ENCODE measurements at regions of chr12 and their contacts with region 1.

Region 1: DNA sequence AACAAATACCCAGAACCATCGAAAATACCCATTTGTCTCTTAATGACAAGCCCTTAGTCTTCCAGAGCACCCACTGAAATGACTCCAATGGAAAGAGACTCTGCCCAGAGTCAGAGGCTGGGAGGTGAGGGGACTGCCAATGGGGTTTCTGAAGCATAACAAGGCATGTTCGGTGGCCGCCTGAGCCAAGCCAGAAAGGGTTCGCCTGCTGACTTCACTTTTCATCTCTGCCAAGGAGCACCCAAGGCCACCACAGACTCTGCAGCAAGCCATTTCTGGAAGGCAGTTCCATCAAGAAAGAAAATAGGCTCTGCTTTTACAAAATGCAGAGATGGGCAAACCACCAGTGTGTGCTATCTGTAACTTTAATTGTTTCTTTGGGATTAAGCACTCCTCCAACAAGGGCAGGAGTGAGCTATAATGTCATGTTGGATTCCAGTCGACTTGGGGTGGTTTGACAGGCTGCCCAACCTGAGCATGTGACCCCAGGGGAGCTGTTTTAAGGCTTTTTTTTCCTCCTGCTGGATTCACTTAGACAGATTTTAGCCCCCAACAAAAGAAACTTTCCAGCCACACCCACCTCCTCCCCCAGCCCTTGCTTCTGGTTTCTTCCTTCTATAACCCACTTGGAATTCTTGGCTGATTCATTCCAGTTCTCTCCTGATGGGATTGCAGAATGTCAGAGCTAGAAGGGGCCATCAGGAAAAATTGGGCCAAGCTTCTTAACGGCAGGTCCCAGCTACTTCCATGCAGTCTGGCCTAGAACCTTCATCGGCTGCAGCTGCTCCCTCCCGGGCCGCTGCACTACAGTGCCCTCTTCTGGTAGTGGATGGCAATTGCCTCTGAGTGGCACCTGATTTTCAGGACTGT is 24.1 kb downstream of the CKAP4 start:
- DNase-seq: peak; percentile 41 to 80 (median 66)
- ATAC-seq: peak; percentile 78
- H3K4me3 ChIP-seq: no peak overlapping the region
- H3K4me3 Mint-ChIP-seq: peak overlapping the region in 3 of 10 donors; percentile 14 to 67 (median 33)
- H3K27ac ChIP-seq: no peak overlapping the region
- H3K27ac Mint-ChIP-seq: peak overlapping the region in 1 of 9 donors; percentile 49
- H3K4me1 ChIP-seq: peaks cover 0 to 13% of the 10 kb centered on the region in 2 donors
- H3K4me1 Mint-ChIP-seq: peaks cover 12 to 22% (median 19%) of the 10 kb centered on the region in 7 donors
- H3K27me3 ChIP-seq: no peaks in the 10 kb centered on the region
- H3K27me3 Mint-ChIP-seq: peaks cover 4 to 20% (median 10%) of the 10 kb centered on the region in 5 donors

Region 2: GRCh38 chr12:105420659-105421240 is 803.0 kb before region 1 on chr12:
- CTCF ChIA-PET with region 1: no interaction called
- POLR2A ChIA-PET with region 1: no interaction called
- intact Hi-C with region 1: loop called (anchors 1 kb)
- DNase-seq: peak in 8 of 9 donors; percentile 8 to 56 (median 44)
- ATAC-seq: peak; percentile 78
- H3K4me3 ChIP-seq: no peak overlapping the region
- H3K4me3 Mint-ChIP-seq: no peak overlapping the region
- H3K27ac ChIP-seq: no peak overlapping the region
- H3K27ac Mint-ChIP-seq: no peak overlapping the region
- H3K4me1 ChIP-seq: no peaks in the 10 kb centered on the region
- H3K4me1 Mint-ChIP-seq: no peaks in the 10 kb centered on the region
- H3K27me3 ChIP-seq: no peaks in the 10 kb centered on the region
- H3K27me3 Mint-ChIP-seq: peaks cover 0 to 6% (median under 1%) of the 10 kb centered on the region in 5 donors

Region 3: GRCh38 chr12:106247674-106248311 is 24.1 kb after region 1 on chr12 and contains the start of gene CKAP4:
- CTCF ChIA-PET with region 1: interaction called, 12 read pairs
- POLR2A ChIA-PET with region 1: interaction called, 9 read pairs
- intact Hi-C with region 1: loop called (anchors 1 kb)
- DNase-seq: peak; percentile 45 to 65 (median 55)
- ATAC-seq: peak; percentile 59
- H3K4me3 ChIP-seq: peak within 1 kb of the TSS; percentile 69
- H3K4me3 Mint-ChIP-seq: peak within 1 kb of the TSS; percentile 81 to 92 (median 86)
- H3K27ac ChIP-seq: peak within 1 kb of the TSS; percentile 80
- H3K27ac Mint-ChIP-seq: peak within 1 kb of the TSS; percentile 58 to 98 (median 94)
- H3K4me1 ChIP-seq: peaks cover 17 to 22% of the 10 kb centered on the region in 2 donors
- H3K4me1 Mint-ChIP-seq: peaks cover 13 to 37% (median 31%) of the 10 kb centered on the region in 7 donors
- H3K27me3 ChIP-seq: no peaks in the 10 kb centered on the region
- H3K27me3 Mint-ChIP-seq: peaks cover 0 to 19% (median 0%) of the 10 kb centered on the region in 5 donors
- total RNA-seq, gene CKAP4: 4.3 to 27.2 (median 13.0) TPM

Region 4: DNA sequence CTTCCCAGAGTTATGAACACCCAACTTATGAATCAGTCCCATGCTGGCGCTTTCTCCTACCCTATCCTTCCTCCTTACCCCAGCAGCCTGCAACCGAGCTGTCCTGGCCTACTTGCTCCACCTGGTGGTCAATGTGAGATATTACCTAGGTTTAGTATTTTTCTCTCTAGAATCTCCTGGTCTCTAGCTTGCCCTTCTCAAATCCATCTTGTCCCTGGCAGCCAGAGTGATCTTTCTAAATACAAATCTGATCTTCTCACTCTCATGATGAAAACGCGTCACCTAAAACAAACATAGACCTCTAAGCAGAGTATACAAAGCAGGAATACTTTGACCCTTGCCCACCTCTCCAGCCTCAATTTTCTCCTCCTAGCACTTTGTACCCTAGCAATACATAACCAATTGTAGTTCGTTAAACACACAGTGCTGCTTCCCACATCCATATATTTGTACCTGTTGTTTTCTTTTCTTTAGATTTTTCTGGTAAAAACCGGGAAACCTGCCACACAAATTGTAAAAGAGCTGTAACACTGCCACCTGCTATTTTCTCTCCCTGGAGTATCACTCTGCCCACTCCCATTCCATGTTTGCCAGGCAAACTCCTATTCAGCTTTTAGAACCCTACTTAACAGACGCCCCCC is 58.9 kb after region 1 on chr12:
- CTCF ChIA-PET with region 1: interaction called, 95 read pairs
- POLR2A ChIA-PET with region 1: interaction called, 22 read pairs
- intact Hi-C with region 1: loop called (anchors 1 kb)
- DNase-seq: peak; percentile 15 to 66 (median 48)
- ATAC-seq: peak; percentile 91
- H3K4me3 ChIP-seq: no peak overlapping the region
- H3K4me3 Mint-ChIP-seq: no peak overlapping the region
- H3K27ac ChIP-seq: no peak overlapping the region
- H3K27ac Mint-ChIP-seq: peak overlapping the region in 3 of 9 donors; percentile 3 to 41 (median 37)
- H3K4me1 ChIP-seq: no peaks in the 10 kb centered on the region
- H3K4me1 Mint-ChIP-seq: peaks cover 7 to 18% (median 8%) of the 10 kb centered on the region in 7 donors
- H3K27me3 ChIP-seq: no peaks in the 10 kb centered on the region
- H3K27me3 Mint-ChIP-seq: peaks cover 0 to 18% (median 4%) of the 10 kb centered on the region in 5 donors

Region 5: DNA sequence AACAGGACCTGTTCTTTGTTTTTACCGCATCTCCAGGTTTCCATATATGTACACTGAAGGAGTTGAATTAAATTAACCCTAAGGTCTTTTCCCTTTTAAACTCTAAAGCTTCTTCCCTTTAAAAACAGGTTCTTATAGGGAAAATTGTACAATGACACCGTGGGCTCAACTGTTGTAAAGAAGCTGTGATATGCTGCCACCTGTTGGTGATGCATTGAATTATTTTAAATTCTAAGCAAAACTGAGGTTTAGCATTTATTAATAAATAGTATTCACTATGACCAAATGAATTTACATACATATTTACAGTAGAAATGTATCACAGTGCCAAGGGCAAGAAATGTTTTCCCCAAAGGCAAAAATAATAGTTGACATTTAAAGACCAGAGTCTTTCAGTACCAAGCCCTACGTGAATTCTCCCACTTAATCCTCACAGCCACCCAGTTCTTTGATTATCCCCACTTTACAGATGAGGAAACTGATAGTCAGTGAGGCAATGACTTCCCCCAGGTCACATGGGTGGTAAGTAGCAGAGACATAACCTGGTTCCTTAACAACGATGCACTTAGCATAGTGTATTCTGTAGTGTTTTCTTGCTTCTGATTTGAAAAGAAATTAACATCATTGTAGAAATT is 696.3 kb after region 1 on chr12:
- CTCF ChIA-PET with region 1: no interaction called
- POLR2A ChIA-PET with region 1: no interaction called
- intact Hi-C with region 1: loop called (anchors 2 to 5 kb)
- DNase-seq: peak in 7 of 9 donors; percentile 12 to 53 (median 32)
- ATAC-seq: peak; percentile 60
- H3K4me3 ChIP-seq: no peak overlapping the region
- H3K4me3 Mint-ChIP-seq: no peak overlapping the region
- H3K27ac ChIP-seq: no peak overlapping the region
- H3K27ac Mint-ChIP-seq: no peak overlapping the region
- H3K4me1 ChIP-seq: peaks cover 0 to under 1% of the 10 kb centered on the region in 2 donors
- H3K4me1 Mint-ChIP-seq: peaks cover 8 to 15% (median 9%) of the 10 kb centered on the region in 7 donors
- H3K27me3 ChIP-seq: no peaks in the 10 kb centered on the region
- H3K27me3 Mint-ChIP-seq: peaks cover 5 to 50% (median 14%) of the 10 kb centered on the region in 5 donors